ENCODE measurements at regions of chr12 and their contacts with region 1.

Region 1: DNA sequence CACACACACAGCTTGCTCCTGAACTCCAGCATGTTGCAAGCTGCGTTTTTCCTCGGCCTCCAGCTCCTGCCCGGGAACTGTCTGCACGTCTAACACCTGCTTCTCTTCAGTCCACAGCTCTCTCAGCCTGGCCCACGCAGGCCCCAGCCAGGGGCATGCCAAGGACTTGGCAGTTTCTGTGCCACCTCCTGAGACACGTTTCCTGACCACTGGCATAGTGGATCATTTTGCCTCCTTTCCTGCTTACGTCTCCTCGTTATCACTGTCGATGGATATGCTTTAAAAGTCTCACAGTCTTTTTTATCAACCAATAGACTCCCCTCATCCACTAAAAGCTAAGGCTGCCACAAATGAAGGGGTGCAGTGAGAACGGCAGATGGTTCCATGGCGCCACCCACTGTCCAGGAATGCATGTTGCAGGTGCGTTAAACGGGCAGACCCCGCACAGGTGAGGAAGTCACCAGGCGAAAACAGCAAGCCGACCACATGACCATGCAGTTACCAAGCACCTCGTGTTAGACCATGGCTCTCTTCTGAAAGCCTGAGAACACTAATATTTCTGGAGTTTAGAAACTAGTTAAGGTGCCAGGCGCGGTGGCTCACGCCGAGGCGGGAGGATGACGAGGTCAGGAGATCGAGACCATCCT is 14.7 kb upstream of the TEAD4 start:
- DNase-seq: peak; percentile 74
- CTCF ChIP-seq: peak; percentile 68

Region 2: DNA sequence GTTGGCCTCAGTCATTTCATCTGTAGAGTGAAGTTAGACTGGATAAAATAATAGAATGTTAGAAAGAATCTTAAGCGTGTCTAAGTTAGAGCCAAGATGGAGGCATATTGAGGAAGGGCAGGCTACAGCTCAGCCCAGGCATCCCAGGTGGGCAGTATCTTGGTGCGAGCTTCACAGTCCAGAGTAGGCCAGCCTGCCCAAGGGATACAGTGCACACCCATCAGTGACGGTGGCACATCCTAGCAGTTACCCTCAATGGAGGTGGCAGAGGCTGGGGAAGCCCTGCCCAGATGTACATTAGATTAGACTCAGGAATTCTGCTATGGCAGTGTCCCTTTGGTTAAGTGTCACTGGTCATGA is 32.3 kb before region 1 on chr12:
- CTCF ChIA-PET with region 1: interaction called, 10 read pairs
- POLR2A ChIA-PET with region 1: no interaction called
- DNase-seq: no peak
- CTCF ChIP-seq: no peak

Region 3: DNA sequence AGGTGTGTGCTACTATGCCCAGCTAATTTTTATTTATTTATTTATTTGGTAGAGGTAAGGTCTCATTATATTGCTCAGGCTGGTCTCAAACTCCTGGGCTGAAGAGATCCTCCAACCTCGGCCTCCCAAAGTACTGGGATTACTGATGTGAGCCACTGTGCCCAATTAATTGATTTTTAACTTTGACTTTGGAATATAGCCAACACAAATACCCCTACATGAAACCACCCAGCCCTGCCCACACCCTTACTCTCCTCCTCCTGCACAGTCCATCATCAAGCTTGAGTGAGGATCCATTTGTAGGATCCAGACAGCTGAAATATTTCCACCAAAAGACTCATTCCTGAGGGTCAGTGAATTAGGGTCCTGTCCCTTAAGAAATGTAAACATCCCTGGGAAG is 11.4 kb after region 1 on chr12:
- CTCF ChIA-PET with region 1: interaction called, 12 read pairs
- POLR2A ChIA-PET with region 1: no interaction called
- DNase-seq: no peak
- CTCF ChIP-seq: no peak

Measured in GM10248 (cell line).